Gastrocnemius medialis (tissue), 4 donors: ENCODE measurements at regions of chr3 and their contacts with region 1.

Region 1: DNA sequence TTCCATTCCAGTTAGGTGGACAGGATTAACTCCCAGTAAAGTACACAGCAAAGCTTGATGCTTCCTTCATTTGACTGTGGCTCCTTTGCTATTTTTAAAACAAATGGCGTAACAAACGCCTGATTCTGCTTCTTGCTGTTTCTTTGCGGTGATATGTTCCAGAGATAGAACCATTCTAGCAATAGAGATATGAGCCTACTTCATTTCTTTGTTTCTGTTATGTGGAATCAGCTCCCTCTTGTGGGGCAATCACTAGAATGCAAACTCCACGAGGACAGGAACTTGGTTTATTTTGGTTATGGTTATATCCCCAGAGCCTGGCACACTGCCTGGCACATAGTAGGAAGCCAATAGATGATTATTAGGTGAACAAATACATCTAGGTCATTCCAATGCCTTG is 122.6 kb upstream of the SLC6A11 start:
- DNase-seq: no peak
- ATAC-seq: peak; percentile 88 to 91
- H3K4me3 ChIP-seq: no peak overlapping the region
- H3K27ac ChIP-seq: peak overlapping the region in 3 of 4 donors; percentile 18 to 59 (median 36)
- H3K4me1 ChIP-seq: peaks cover 0 to 6% of the 10 kb centered on the region in 2 donors
- H3K27me3 ChIP-seq: no peaks in the 10 kb centered on the region
- CTCF ChIP-seq: peak in 4 of 5 experiments; percentile 36 to 50 (median 44)
- POLR2A ChIP-seq: no peak

Region 2: DNA sequence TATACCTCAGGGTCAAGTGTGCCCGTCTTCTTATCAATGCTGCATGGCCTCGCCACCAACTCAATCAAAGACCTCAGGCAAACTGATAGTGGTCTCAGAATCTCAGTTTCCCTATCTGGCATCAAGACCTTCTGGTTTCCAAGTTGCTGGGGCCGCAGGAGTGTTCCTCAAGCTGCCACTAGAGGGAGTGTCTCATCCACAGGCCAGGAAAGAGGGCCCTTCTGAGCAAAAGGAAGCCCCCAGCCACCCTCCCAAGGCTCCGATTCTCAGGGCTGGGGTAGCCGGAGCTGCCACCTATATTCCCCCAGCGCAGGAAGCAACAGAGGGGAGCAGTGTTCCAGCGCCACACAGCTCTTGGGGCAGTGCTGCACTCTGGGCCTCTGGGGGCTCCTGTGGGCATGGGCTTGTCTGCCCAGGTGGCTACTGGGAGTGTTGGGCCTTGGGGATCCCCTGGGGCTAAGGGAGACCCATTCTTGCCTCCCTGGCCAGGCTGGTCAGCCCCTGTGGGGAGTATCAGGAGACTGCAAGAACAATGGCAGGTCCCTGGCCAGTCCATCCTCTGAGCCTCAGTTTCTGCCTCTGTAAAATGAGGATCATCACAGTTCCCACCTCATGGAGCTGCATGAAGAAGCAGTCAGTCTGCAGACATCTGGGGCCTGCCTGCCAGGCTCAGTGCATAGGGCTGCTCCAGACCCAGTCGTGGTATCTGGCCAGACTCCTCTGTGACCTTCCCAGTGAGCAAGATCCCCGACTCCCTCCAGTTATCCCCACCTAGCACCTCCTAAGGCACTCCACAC is 349.1 kb before region 1 on chr3:
- in situ Hi-C with region 1: no loop called
- intact Hi-C with region 1: loop called (anchors 1 kb)
- DNase-seq: no peak
- ATAC-seq: peak; percentile 59 to 61
- H3K4me3 ChIP-seq: no peak overlapping the region
- H3K27ac ChIP-seq: no peak overlapping the region
- H3K4me1 ChIP-seq: peaks cover 4 to 9% of the 10 kb centered on the region in 2 donors
- H3K27me3 ChIP-seq: no peaks in the 10 kb centered on the region
- CTCF ChIP-seq: peak; percentile 79 to 95 (median 86)
- POLR2A ChIP-seq: no peak

Region 3: DNA sequence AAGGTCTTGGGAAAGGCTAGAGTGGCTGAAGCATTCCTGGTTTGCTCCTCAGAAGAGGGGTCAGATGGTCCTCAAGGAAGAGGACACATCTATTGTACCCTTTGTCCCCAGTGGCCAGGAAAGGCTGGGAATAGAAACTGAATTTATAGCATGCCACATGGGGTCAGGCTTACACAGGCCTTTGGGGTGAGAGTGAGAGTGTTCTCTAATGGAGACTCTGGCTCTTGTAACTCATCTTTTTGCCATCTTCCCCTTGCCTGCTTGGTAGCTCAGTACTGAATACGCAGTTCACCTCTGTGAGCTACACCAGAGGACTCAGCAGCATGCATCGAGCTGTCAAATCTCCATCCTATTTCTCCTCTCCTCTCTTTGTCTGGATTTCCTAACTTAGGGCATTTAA is 275.6 kb before region 1 on chr3:
- in situ Hi-C with region 1: no loop called
- intact Hi-C with region 1: loop called (anchors 10 kb)
- DNase-seq: no peak
- ATAC-seq: peak; percentile 50 to 60
- H3K4me3 ChIP-seq: no peak overlapping the region
- H3K27ac ChIP-seq: no peak overlapping the region
- H3K4me1 ChIP-seq: no peaks in the 10 kb centered on the region
- H3K27me3 ChIP-seq: no peaks in the 10 kb centered on the region
- CTCF ChIP-seq: peak in 4 of 5 experiments; percentile 13 to 37 (median 27)
- POLR2A ChIP-seq: no peak